ENCODE measurements at regions of chr12 and their contacts with region 1.

Region 1: DNA sequence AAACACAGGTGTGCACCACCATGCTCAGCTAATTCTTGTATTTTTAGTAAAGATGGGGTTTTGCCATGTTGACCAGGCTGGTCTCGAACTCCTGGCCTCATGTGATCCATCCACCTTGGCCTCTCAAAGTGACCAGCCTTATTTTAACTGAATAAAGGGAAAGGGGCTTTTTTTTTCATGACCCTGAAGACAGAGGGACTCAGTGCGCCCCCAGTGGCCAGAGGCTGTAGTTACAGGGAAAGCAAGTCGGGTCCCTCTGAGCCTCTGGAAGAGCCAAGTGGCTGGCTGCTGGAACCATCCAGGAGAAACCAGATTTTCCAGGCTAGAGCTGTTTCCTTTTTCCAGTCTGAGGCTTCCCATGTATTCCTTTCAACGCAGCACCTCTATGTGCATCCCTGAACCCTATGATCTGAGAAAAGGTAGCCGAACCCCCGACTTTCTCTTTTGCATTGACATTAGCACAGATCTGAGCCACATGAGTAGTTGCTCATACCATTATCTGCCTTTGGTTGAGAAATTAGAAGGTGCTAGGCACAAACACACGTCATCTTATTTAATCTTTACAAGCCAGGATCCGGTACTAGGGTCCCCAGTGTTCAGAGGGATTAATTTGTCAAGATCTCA is 342.7 kb downstream of the CACNA1C start:
- DNase-seq: peak; percentile 85
- ATAC-seq: peak; percentile 90
- H3K4me3 Mint-ChIP-seq: no peak overlapping the region
- H3K27ac Mint-ChIP-seq: peak overlapping the region; percentile 60; the same call in 1 of the 2 replicates
- H3K4me1 Mint-ChIP-seq: peaks cover 3% of the 10 kb centered on the region; the same call in 1 of the 2 replicates
- H3K27me3 Mint-ChIP-seq: no peaks in the 10 kb centered on the region; the same call in 1 of the 2 replicates
- CTCF ChIP-seq: peak; percentile 94

Region 2: DNA sequence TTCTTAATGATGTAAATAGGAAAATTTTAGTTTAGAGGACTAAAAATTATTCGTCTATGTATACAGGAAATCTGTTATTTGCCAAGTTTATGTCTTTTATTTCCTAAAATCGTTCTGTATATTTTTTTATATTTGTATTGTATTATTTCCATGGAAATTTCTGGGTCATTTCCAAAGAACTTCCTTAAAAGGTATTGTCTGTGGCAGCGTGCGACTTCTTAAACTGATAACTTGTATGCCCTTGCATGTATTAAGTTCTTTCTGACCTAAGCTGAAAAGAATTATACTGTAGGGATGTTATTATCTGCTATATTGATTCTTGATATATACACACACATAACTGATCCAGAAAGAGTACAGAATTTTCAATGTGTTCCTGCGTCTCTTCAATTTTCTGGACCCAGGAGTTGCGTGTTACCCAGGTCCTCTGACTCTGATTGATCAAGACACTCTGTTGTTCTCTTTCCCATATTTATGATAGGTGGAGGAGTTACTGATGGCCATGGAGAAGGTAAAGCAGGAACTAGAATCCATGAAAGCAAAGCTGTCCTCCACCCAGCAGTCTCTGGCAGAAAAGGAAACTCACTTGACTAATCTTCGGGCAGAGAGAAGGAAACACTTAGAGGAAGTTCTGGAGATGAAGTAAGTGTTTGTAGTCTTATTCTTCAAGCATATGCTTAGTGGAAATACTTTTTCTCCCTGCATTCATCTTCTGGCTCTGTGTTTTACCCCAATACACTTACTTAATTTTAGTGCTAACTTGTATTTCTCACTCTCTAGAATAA is 1105.9 kb before region 1 on chr12:
- CTCF ChIA-PET with region 1: no interaction called
- POLR2A ChIA-PET with region 1: no interaction called
- DNase-seq: no peak
- ATAC-seq: no peak
- H3K4me3 Mint-ChIP-seq: no peak overlapping the region
- H3K27ac Mint-ChIP-seq: no peak overlapping the region
- H3K4me1 Mint-ChIP-seq: no peaks in the 10 kb centered on the region
- H3K27me3 Mint-ChIP-seq: no peaks in the 10 kb centered on the region
- CTCF ChIP-seq: no peak

Region 3: DNA sequence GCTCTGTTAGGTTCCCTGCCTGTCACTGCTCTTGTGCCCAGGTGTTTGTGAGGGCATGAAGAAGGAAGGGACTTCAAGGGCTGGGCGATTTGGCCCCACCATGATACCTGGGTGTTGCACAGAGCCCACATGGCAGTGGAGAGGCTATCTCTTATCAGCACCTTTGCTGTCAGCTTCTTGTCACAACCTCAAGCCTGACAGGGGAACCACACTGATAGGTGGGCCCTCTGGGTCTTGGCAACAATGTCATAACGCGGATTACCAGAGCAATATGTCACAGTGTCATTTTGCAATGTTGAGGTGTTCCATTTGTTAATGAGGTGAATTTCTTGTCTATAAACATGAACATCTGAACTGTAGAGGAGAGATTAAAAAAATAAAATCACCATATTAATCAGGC is 365.6 kb before region 1 on chr12:
- CTCF ChIA-PET with region 1: no interaction called
- POLR2A ChIA-PET with region 1: no interaction called
- DNase-seq: no peak
- ATAC-seq: no peak
- H3K4me3 Mint-ChIP-seq: no peak overlapping the region
- H3K27ac Mint-ChIP-seq: no peak overlapping the region
- H3K4me1 Mint-ChIP-seq: 0 out of 2 replicates have a peak, but pooled peaks cover 3% of the 10 kb centered on the region
- H3K27me3 Mint-ChIP-seq: peaks cover 22% of the 10 kb centered on the region
- CTCF ChIP-seq: no peak

Region 4: DNA sequence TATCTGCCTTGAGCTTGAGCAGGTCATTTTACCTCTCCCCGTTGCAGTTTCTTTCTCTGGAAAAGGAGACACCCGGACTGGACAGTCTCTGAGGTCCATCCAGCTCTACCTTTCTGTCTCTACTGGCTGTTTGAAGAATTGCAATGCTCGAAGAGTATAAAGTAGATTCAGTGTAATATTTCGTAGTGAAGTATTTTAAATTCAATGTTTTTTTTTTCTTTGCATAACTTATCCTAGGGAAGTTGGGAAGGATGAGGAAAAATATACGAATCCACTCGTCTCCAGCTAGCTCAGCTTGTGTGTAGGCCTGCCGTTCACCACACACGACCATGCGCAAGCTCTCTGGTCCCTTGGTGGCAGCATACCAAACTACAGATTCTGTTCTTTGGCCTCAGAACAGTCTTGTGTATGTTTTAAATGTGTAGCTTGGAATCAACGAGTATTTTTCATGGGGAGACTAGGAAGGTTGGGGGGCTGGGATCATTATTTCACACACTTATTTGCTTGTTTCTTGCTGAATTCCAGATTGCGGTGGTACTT is 34.8 kb before region 1 on chr12:
- CTCF ChIA-PET with region 1: interaction called, 11 read pairs
- POLR2A ChIA-PET with region 1: no interaction called
- DNase-seq: no peak
- ATAC-seq: no peak; the same call in 1 of the 2 replicates
- H3K4me3 Mint-ChIP-seq: no peak overlapping the region
- H3K27ac Mint-ChIP-seq: no peak overlapping the region
- H3K4me1 Mint-ChIP-seq: peaks cover 22% of the 10 kb centered on the region
- H3K27me3 Mint-ChIP-seq: no peaks in the 10 kb centered on the region
- CTCF ChIP-seq: peak; percentile 19; the same call in 1 of the 2 replicates

Region 5: GRCh38 chr12:2382370-2383155 is 12.9 kb before region 1 on chr12:
- CTCF ChIA-PET with region 1: interaction called, 12 read pairs
- POLR2A ChIA-PET with region 1: no interaction called
- DNase-seq: no peak
- ATAC-seq: no peak
- H3K4me3 Mint-ChIP-seq: no peak overlapping the region
- H3K27ac Mint-ChIP-seq: no peak overlapping the region
- H3K4me1 Mint-ChIP-seq: peaks cover 19% of the 10 kb centered on the region
- H3K27me3 Mint-ChIP-seq: no peaks in the 10 kb centered on the region
- CTCF ChIP-seq: no peak

Region 6: DNA sequence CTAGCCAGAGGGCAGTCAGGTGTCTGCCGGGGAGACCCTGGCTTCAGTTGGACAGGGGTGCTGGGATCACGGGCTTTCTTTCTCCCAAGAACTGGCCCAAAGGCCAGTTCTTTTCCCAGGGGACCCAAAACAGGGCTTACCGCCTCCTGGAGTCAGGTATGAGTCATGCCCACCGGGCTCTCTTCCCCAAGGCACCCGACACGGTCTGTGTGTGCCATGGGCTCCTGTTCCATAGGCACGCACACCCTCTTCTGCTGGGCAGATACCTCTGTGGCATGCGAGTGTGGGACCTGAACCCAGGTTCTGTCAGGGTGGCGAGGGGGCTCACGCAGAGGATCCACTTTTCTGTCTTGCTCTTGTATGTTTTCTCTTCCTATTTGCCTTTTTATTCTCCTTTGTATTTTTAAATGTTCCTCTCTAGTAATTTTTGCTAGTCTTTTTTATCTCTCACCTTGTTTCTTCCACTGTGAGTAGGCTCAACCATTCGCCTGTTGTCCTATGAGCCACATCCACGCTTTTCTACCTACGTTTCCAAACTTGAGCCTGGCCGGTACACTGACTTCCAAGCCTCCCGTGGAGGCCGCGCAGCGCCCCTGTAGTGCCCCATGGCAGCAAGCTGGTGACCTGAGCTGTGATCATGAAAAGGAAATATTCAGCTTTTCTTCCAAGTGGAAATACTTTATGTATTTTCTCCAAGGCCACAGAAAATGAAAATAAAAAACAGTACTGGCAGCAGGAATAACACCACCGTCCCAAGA is 19.5 kb after region 1 on chr12:
- CTCF ChIA-PET with region 1: interaction called, 28 read pairs
- POLR2A ChIA-PET with region 1: no interaction called
- DNase-seq: no peak
- ATAC-seq: no peak
- H3K4me3 Mint-ChIP-seq: no peak overlapping the region
- H3K27ac Mint-ChIP-seq: no peak overlapping the region
- H3K4me1 Mint-ChIP-seq: peaks cover 54% of the 10 kb centered on the region
- H3K27me3 Mint-ChIP-seq: no peaks in the 10 kb centered on the region
- CTCF ChIP-seq: no peak

Region 7: DNA sequence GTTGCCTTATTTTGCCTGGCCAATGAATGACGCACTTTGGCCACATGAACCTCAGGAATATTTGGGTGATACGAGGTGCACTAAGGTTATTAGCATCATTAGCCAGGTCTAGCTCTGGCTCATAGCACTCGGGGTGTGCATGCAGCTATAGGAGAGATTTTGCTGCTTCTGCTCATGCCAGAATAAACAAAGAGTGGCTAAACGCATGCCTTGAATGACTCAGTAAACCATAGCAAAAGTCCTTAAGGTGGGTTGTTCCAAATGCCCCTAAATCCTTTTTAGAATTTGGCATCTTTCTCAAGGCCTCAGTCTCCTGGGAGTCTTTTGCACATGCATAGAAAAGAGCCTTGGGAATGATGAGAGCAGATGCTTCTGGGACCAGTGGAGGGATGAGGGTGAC is 55.6 kb after region 1 on chr12:
- CTCF ChIA-PET with region 1: no interaction called
- POLR2A ChIA-PET with region 1: no interaction called
- DNase-seq: no peak
- ATAC-seq: no peak
- H3K4me3 Mint-ChIP-seq: no peak overlapping the region
- H3K27ac Mint-ChIP-seq: no peak overlapping the region
- H3K4me1 Mint-ChIP-seq: peaks cover 3% of the 10 kb centered on the region; the same call in 1 of the 2 replicates
- H3K27me3 Mint-ChIP-seq: no peaks in the 10 kb centered on the region
- CTCF ChIP-seq: no peak

Region 8: GRCh38 chr12:2583091-2583497 is 187.6 kb after region 1 on chr12:
- CTCF ChIA-PET with region 1: interaction called, 10 read pairs
- POLR2A ChIA-PET with region 1: no interaction called
- DNase-seq: peak; percentile 79
- ATAC-seq: peak; percentile 89
- H3K4me3 Mint-ChIP-seq: no peak overlapping the region
- H3K27ac Mint-ChIP-seq: no peak overlapping the region
- H3K4me1 Mint-ChIP-seq: peaks cover 20% of the 10 kb centered on the region
- H3K27me3 Mint-ChIP-seq: peaks cover 33% of the 10 kb centered on the region
- CTCF ChIP-seq: peak; percentile 91

Measured in WTC11 (cell line).